ENCODE measurements at regions of chr14 and their contacts with region 1.

Region 1: DNA sequence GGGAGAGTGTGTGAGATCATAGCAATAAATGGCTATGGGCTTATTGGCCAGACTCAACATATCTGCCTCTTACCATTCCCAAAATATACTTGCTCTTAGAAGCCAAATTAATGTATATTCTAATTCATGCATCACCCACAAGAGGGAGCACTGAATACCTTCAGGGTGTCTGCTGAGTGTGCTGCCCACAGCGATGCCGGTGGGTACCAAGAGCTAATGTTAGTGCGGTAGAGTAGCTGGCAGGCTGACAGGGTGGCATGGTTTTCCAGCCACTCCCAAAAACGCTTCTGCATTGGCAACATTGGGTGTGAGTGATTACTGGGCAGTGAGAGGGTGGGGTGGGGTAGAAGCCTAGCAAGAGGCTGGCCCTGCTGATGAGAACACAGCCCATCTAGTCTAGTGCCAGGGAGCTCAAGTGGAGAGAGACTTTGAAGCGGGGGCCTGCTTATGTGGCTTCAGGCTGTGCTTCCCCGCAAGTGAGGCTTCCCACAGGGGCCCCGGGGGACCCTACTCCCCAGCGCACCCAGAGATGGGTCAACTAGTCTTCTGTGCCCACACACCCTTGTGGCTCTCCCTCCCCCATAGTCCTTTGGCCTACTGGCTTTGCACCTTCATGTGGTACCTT is 9.2 kb upstream of the PLEKHD1 start:
- DNase-seq: no peak
- ATAC-seq: peak; percentile 84
- H3K4me3 ChIP-seq: no peak overlapping the region
- H3K27ac ChIP-seq: no peak overlapping the region
- H3K4me1 ChIP-seq: no peaks in the 10 kb centered on the region
- H3K27me3 ChIP-seq: no peaks in the 10 kb centered on the region
- CTCF ChIP-seq: peak; percentile 51 to 57 (median 55)
- EP300 ChIP-seq: no peak
- POLR2A ChIP-seq: no peak
- RAD21 ChIP-seq: peak; percentile 34; the same call in 1 of the 2 replicates

Region 2: GRCh38 chr14:69487226-69487625 is 11.9 kb after region 1 on chr14:
- CTCF ChIA-PET with region 1: interaction called, 15 read pairs
- POLR2A ChIA-PET with region 1: no interaction called
- RAD21 ChIA-PET with region 1: no interaction called
- SMC1A ChIA-PET with region 1: interaction called, 6 read pairs
- in situ Hi-C with region 1: no loop called
- intact Hi-C with region 1: no loop called
- DNase-seq: no peak
- ATAC-seq: no peak
- H3K4me3 ChIP-seq: no peak overlapping the region
- H3K27ac ChIP-seq: no peak overlapping the region
- H3K4me1 ChIP-seq: peaks cover 3% of the 10 kb centered on the region
- H3K27me3 ChIP-seq: peaks cover 9 to 14% of the 10 kb centered on the region in 2 experiments; a peak in 3 of 4 replicates
- CTCF ChIP-seq: no peak
- EP300 ChIP-seq: no peak
- POLR2A ChIP-seq: no peak
- RAD21 ChIP-seq: no peak

Region 3: DNA sequence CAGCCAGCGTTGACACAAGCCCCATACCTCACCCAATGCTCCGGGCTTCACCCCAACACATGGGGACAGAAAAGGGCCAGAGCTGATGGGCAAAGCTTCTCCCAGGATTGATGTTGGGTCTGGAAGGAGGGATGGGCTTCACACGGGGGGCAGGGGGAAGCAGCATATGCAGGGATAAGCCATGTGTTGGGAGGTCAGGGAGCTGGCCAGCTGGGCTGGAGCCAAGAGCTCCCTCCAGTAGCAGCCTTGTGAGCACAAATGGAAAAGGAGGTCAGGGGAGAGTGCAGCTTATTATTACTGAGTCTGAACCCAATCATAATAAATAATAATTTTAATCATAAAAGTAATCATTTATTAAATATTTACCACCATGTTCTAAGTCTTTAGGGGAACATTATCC is 18.5 kb after region 1 on chr14:
- CTCF ChIA-PET with region 1: interaction called, 15 read pairs
- POLR2A ChIA-PET with region 1: no interaction called
- RAD21 ChIA-PET with region 1: no interaction called
- SMC1A ChIA-PET with region 1: interaction called, 6 read pairs
- in situ Hi-C with region 1: no loop called
- intact Hi-C with region 1: no loop called
- DNase-seq: no peak
- ATAC-seq: no peak
- H3K4me3 ChIP-seq: no peak overlapping the region
- H3K27ac ChIP-seq: no peak overlapping the region
- H3K4me1 ChIP-seq: no peaks in the 10 kb centered on the region
- H3K27me3 ChIP-seq: no peaks in the 10 kb centered on the region
- CTCF ChIP-seq: no peak
- EP300 ChIP-seq: no peak
- POLR2A ChIP-seq: no peak
- RAD21 ChIP-seq: no peak

Region 4: DNA sequence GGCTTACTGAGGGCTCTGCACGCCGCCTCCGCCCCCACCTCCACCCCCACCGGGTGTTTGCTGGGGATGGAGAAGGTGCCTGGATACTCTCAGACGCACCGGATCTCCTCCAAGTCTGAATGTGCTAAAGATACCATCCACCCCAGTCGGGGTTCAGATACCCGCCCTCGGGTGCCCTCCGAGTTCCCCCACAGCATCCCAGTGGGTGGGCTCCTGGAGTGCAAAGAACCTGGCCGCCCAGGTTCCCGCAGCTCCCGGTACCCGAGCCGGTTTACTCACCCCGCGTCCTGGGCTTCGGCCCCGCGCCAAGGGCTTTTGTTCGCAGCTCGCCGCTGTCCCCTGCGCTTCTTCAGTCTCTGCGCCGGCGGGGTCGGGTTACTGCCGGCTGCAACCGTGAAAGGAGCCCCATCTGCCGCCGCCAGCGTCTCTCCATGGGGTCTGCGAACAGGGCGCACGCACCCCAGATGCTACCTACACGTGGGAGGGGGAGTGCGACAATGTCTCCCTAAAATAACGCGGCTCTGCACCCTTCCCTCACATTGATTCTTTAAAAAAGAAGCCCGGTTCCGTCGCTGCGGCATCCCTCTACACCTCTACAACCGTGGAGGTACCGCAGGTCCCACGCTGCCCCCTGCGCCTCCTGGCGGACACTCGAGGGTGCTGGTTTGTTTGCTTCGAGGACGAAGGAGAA is 99.1 kb after region 1 on chr14 and contains the start of gene CCDC177:
- CTCF ChIA-PET with region 1: interaction called, 4 read pairs
- POLR2A ChIA-PET with region 1: no interaction called
- RAD21 ChIA-PET with region 1: no interaction called
- SMC1A ChIA-PET with region 1: no interaction called
- in situ Hi-C with region 1: no loop called
- intact Hi-C with region 1: loop called (anchors 10 kb)
- DNase-seq: no peak
- ATAC-seq: peak; percentile 93
- H3K4me3 ChIP-seq: no peak within 1 kb of the TSS
- H3K27ac ChIP-seq: no peak within 1 kb of the TSS
- H3K4me1 ChIP-seq: no peaks in the 10 kb centered on the region
- H3K27me3 ChIP-seq: peaks cover 13 to 16% of the 10 kb centered on the region in 2 experiments
- CTCF ChIP-seq: peak; percentile 77 to 88 (median 87)
- EP300 ChIP-seq: no peak
- POLR2A ChIP-seq: no peak
- RAD21 ChIP-seq: peak; percentile 70
- polyA plus RNA-seq, gene CCDC177: not detected

Measured in GM12878 (cell line).